Activated CD4-positive, alpha-beta memory T cell treated with anti-CD3 and anti-CD28 coated beads, Interleukin-2, amount 10 ng/mL, durations not matched to agents 7 days and 5 days (primary cell): ENCODE measurements at regions of chr11 and their contacts with region 1.

Region 1: DNA sequence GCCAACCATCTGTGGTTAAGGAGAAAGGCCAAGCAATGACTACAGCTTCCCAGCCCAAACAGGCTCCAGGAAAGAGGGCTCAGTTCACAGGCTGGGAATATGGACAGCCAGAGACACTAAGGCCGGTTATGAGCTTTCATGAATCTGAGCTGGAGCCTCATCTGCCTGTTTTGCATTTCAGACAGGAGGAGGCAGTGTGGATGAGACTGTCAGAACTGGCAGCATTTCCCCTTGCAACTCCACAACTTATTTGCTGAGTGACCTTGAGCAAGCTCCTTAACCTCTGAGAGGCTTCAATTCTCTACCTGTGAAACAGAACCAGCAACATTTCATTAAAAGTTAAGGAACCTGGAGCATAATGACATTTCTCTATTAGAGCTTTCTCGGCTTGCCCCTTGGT is 264.0 kb downstream of the ETS1 start:
- DNase-seq: peak; percentile 65
- H3K4me3 Mint-ChIP-seq: no peak overlapping the region
- H3K27ac Mint-ChIP-seq: peak overlapping the region; percentile 98
- H3K4me1 Mint-ChIP-seq: peaks cover 91% of the 10 kb centered on the region
- H3K27me3 Mint-ChIP-seq: no peaks in the 10 kb centered on the region

Region 2: GRCh38 chr11:128187835-128188234 is 135.5 kb before region 1 on chr11:
- CTCF ChIA-PET with region 1: no interaction called
- POLR2A ChIA-PET with region 1: no interaction called
- DNase-seq: no peak
- H3K4me3 Mint-ChIP-seq: no peak overlapping the region
- H3K27ac Mint-ChIP-seq: no peak overlapping the region
- H3K4me1 Mint-ChIP-seq: peaks cover 17% of the 10 kb centered on the region
- H3K27me3 Mint-ChIP-seq: no peaks in the 10 kb centered on the region

Region 3: DNA sequence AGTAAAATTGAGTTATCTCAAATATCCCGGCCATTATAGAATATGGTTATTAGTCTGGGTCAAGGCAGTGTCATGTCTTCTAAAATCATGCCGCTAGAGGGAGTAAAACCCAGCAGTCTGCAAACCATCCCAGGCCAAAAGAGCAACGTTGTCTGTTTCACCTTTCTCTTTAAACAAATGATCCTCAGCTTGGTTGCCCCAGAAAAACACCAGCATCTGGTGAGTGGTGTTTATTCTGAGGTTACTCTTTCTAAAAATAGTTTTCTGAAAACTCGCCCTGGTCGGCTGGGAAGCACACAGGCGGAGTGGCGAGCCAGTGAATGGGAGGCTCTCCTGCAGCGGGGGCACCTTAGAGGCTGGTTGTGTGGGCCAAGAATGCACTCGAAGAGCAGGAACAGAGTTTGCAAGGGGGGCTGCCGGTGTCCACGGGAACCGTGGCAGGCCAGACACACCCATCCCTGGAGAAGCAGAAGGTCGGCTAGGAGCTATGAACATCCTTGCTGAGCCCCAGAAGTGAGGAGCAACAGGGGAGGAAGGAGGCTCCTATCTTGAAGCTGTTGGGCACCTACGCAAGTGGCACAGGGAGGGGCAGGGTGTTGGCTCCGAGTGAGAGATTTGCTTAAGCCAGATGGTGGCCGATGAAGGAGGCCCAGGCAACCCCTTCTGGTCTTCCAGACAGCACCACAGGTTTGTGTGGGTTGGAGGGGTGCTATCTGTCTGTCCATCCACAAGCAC is 33.1 kb before region 1 on chr11:
- CTCF ChIA-PET with region 1: interaction called, 45 read pairs
- POLR2A ChIA-PET with region 1: interaction called, 119 read pairs
- DNase-seq: peak; percentile 79
- H3K4me3 Mint-ChIP-seq: peak overlapping the region; percentile 92
- H3K27ac Mint-ChIP-seq: peak overlapping the region; percentile 97
- H3K4me1 Mint-ChIP-seq: peaks cover 87% of the 10 kb centered on the region
- H3K27me3 Mint-ChIP-seq: no peaks in the 10 kb centered on the region

Region 4: DNA sequence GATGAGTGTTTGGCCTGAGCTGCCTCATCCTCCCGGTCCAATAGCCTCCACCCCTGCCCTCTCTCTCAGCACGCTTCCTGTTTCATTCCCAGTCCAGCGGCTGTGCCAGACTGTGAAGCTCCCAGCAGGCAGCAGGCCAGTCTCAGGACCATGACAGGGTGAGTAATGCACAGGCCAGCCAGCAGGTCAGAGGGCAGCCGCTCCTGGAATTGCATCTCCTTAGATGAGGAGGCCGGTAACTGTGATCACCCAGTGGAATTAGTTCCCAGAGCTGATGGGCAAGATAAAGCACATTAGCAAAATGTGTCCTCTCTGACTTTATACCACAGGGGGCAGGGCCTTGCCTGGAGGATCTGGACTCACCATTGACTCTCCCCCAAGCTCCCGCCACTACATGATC is 12.8 kb after region 1 on chr11:
- CTCF ChIA-PET with region 1: interaction called, 35 read pairs
- POLR2A ChIA-PET with region 1: interaction called, 146 read pairs
- DNase-seq: no peak
- H3K4me3 Mint-ChIP-seq: no peak overlapping the region
- H3K27ac Mint-ChIP-seq: no peak overlapping the region
- H3K4me1 Mint-ChIP-seq: peaks cover 43% of the 10 kb centered on the region
- H3K27me3 Mint-ChIP-seq: no peaks in the 10 kb centered on the region

Region 5: GRCh38 chr11:128448200-128448886 is 125.0 kb after region 1 on chr11:
- CTCF ChIA-PET with region 1: interaction called, 11 read pairs
- POLR2A ChIA-PET with region 1: interaction called, 6 read pairs
- DNase-seq: no peak
- H3K4me3 Mint-ChIP-seq: no peak overlapping the region
- H3K27ac Mint-ChIP-seq: no peak overlapping the region
- H3K4me1 Mint-ChIP-seq: peaks cover 38% of the 10 kb centered on the region
- H3K27me3 Mint-ChIP-seq: no peaks in the 10 kb centered on the region

Region 6: GRCh38 chr11:128482512-128483191 is 159.3 kb after region 1 on chr11:
- CTCF ChIA-PET with region 1: interaction called, 9 read pairs
- POLR2A ChIA-PET with region 1: interaction called, 24 read pairs
- DNase-seq: peak; percentile 59
- H3K4me3 Mint-ChIP-seq: peak overlapping the region; percentile 67
- H3K27ac Mint-ChIP-seq: peak overlapping the region; percentile 92
- H3K4me1 Mint-ChIP-seq: peaks cover 95% of the 10 kb centered on the region
- H3K27me3 Mint-ChIP-seq: no peaks in the 10 kb centered on the region

Region 7: GRCh38 chr11:128512474-128512996 is 189.2 kb after region 1 on chr11:
- CTCF ChIA-PET with region 1: interaction called, 19 read pairs
- POLR2A ChIA-PET with region 1: interaction called, 59 read pairs
- DNase-seq: peak; percentile 63
- H3K4me3 Mint-ChIP-seq: peak overlapping the region; percentile 97
- H3K27ac Mint-ChIP-seq: peak overlapping the region; percentile 88
- H3K4me1 Mint-ChIP-seq: peaks cover 97% of the 10 kb centered on the region
- H3K27me3 Mint-ChIP-seq: no peaks in the 10 kb centered on the region

Region 8: DNA sequence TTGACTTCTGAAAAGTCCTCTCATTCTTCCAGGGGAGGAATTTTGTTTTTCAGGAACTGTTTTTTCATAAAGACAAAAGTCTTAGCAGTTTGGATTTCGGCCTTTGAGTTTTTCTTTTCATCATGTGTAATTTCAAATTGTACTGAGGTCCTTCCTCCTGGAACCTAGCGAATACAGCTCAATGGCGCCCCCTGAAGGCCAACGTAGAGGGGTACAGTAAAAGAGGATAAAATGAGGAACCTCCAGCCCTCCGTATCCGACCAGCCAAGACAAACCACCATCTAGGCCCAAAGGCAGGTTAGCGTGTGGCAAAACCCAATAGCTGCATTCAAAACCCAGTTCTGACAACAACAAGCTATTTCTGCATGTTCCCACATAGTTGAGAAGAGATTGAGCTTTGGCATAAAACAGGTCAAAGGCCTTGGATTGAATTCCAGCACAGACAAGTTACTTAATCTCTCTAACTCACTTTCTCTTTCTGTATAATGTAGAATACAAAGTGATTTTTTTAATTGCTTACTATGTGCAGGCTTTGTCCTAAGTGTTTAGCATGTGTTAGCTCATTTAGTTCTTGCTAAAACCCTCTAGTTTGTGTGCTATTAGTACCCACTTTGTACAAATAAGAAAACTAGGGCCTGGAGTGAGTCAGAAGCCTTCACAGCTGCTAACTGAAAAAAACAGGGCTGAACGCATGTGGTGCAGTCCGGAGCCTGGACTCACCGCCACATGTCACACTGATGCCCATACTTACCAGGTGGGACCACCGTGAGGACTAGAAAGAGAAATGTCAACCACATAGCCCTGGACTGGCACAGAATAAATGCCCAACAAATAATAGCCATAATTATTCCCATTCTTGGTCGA is 307.2 kb after region 1 on chr11:
- CTCF ChIA-PET with region 1: interaction called, 28 read pairs
- POLR2A ChIA-PET with region 1: interaction called, 15 read pairs
- DNase-seq: peak; percentile 91
- H3K4me3 Mint-ChIP-seq: peak overlapping the region; percentile 38
- H3K27ac Mint-ChIP-seq: peak overlapping the region; percentile 85
- H3K4me1 Mint-ChIP-seq: peaks cover 63% of the 10 kb centered on the region
- H3K27me3 Mint-ChIP-seq: no peaks in the 10 kb centered on the region